Activated CD4-positive, alpha-beta T cell treated with anti-CD3 and anti-CD28 coated beads for 36 hours (primary cell): ENCODE measurements at regions of chr3 and their contacts with region 1.

Region 1: DNA sequence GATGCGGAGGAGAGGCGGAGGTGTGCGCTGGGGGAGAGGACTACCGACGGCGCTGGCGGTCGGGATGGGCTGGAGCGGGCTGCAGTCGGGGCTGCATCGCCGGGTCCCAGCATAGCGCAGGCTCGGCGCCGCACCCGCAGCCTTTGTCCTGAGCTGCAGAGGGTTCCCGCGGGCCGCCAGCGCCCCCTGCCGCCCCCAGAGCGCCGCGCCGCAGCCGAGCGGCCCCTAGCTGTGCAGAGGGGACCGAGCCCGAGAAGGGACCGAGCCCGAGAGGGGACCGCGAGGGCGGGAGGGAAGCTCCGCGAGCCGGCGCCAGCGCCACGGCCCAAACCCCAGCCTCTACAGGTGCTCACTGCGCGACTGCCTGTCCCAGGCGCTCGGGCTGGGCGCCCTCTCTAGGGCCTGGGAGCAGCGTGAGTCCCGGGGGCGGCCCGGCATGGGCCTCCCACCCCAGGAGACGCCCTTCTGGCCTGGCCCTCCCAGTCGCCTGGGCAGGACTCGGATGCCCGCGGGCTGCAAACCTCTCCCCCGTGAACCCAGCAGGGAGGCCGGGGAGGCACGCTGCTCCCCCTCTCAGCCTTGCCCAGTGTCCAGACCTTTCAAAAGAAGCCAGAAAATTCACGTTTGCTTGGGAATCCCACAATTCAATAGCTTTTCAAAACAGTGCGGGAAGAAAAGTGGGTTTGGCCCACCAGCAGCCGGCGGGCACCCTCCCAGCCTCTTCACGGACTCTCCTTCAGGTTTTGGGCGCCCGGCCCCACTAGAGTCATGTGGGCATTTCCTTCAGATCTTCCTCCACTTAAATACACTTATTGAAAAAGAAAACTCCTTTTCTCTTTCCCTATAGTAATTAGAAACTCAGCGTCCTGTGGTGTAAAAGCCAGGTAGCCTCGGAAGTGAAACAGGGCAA is 134.7 kb downstream of the TPRA1 start:
- DNase-seq: peak; percentile 86
- ATAC-seq: peak; percentile 95
- H3K4me3 Mint-ChIP-seq: no peak overlapping the region
- H3K27ac Mint-ChIP-seq: no peak overlapping the region
- H3K4me1 Mint-ChIP-seq: peaks cover 13% of the 10 kb centered on the region
- H3K27me3 Mint-ChIP-seq: peaks cover 60% of the 10 kb centered on the region

Region 2: GRCh38 chr3:126522363-126522788 is 933.4 kb before region 1 on chr3:
- CTCF ChIA-PET with region 1: interaction called, 3 read pairs
- POLR2A ChIA-PET with region 1: no interaction called
- intact Hi-C with region 1: loop called (anchors 1 to 5 kb)
- DNase-seq: peak; percentile 53
- ATAC-seq: no peak
- H3K4me3 Mint-ChIP-seq: no peak overlapping the region
- H3K27ac Mint-ChIP-seq: no peak overlapping the region
- H3K4me1 Mint-ChIP-seq: no peaks in the 10 kb centered on the region
- H3K27me3 Mint-ChIP-seq: peaks cover 7% of the 10 kb centered on the region

Region 3: GRCh38 chr3:126679318-126679751 is 776.5 kb before region 1 on chr3:
- CTCF ChIA-PET with region 1: interaction called, 3 read pairs
- POLR2A ChIA-PET with region 1: no interaction called
- intact Hi-C with region 1: loop called (anchors 1 kb)
- DNase-seq: peak; percentile 88
- ATAC-seq: peak; percentile 84
- H3K4me3 Mint-ChIP-seq: no peak overlapping the region
- H3K27ac Mint-ChIP-seq: no peak overlapping the region
- H3K4me1 Mint-ChIP-seq: peaks cover 4% of the 10 kb centered on the region
- H3K27me3 Mint-ChIP-seq: peaks cover 3% of the 10 kb centered on the region

Region 4: DNA sequence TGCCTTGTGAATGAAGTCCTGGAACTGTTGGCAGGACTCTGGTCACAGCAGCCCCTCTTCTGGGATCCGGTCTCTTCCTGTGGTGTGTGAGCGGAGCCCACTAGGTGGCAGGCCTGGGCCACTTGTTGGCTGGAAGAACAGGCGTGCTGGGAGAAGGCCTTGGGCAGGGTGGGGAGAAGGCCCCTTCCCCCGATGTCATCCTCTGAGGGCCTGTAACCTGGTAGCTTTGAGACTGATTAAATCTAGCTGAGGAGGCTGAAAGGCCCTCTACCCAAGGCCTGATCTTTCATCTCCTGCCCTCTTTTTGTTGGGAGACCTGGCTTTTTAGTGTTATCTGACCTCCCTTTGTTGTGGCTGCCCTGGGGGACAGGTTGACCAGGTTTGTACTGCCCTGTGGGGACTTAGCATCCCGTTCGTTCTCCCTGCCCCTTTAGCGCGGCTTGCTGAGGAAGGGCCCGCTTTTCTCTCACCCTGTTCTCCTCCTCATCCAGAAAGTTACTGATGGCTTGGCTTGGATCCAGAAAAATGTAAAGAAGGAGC is 703.4 kb before region 1 on chr3:
- CTCF ChIA-PET with region 1: no interaction called
- POLR2A ChIA-PET with region 1: no interaction called
- intact Hi-C with region 1: loop called in 1 of 2 experiments (anchors 1 kb)
- DNase-seq: peak; percentile 78
- ATAC-seq: peak; percentile 90
- H3K4me3 Mint-ChIP-seq: no peak overlapping the region
- H3K27ac Mint-ChIP-seq: no peak overlapping the region
- H3K4me1 Mint-ChIP-seq: no peaks in the 10 kb centered on the region
- H3K27me3 Mint-ChIP-seq: no peaks in the 10 kb centered on the region

Region 5: GRCh38 chr3:127114337-127115070 is 341.3 kb before region 1 on chr3:
- CTCF ChIA-PET with region 1: no interaction called
- POLR2A ChIA-PET with region 1: no interaction called
- intact Hi-C with region 1: no loop called
- DNase-seq: no peak
- ATAC-seq: no peak
- H3K4me3 Mint-ChIP-seq: no peak overlapping the region
- H3K27ac Mint-ChIP-seq: no peak overlapping the region
- H3K4me1 Mint-ChIP-seq: no peaks in the 10 kb centered on the region
- H3K27me3 Mint-ChIP-seq: peaks cover 6% of the 10 kb centered on the region

Region 6: GRCh38 chr3:127374086-127375010 is 81.4 kb before region 1 on chr3:
- CTCF ChIA-PET with region 1: interaction called, 3 read pairs
- POLR2A ChIA-PET with region 1: no interaction called
- intact Hi-C with region 1: loop called (anchors 1 to 10 kb)
- DNase-seq: peak; percentile 64
- ATAC-seq: no peak
- H3K4me3 Mint-ChIP-seq: no peak overlapping the region
- H3K27ac Mint-ChIP-seq: no peak overlapping the region
- H3K4me1 Mint-ChIP-seq: no peaks in the 10 kb centered on the region
- H3K27me3 Mint-ChIP-seq: peaks cover 8% of the 10 kb centered on the region